ENCODE measurements at regions of chr1 and their contacts with region 1.

Region 1: DNA sequence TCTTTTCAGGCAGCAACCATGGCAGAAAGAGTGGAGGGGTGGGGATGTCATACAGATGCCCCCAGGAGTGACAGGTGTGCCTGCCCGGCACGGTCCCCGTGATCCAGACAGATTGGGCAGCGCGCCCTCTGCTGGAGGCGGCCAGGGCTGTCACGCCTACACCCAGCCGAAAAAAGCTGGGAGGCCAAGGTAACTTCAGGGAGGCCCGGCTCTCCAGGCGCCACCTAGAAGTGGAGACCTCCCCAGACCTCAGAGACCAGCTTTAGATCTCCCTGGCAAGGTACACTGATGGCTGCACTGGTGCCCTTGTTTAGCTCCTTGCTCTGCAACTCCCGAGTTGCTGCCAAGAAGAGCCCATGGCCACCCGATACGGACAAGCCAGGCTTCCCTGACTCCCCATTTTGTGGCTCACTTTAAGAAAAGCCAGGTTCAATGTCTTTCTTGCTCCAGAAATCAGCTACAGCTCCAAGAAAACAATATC is 6.6 kb downstream of the GOLT1A start:
- DNase-seq: peak; percentile 70
- ATAC-seq: peak; percentile 89 to 94

Region 2: GRCh38 chr1:204162231-204163074 is 44.7 kb before region 1 on chr1:
- intact Hi-C with region 1: loop called (anchors 2 to 5 kb)
- DNase-seq: peak; percentile 81
- ATAC-seq: peak; percentile 93

Measured in left cardiac atrium (tissue), 4 donors.